Panc1 (cell line): ENCODE measurements at regions of chr4 and their contacts with region 1.

Region 1: DNA sequence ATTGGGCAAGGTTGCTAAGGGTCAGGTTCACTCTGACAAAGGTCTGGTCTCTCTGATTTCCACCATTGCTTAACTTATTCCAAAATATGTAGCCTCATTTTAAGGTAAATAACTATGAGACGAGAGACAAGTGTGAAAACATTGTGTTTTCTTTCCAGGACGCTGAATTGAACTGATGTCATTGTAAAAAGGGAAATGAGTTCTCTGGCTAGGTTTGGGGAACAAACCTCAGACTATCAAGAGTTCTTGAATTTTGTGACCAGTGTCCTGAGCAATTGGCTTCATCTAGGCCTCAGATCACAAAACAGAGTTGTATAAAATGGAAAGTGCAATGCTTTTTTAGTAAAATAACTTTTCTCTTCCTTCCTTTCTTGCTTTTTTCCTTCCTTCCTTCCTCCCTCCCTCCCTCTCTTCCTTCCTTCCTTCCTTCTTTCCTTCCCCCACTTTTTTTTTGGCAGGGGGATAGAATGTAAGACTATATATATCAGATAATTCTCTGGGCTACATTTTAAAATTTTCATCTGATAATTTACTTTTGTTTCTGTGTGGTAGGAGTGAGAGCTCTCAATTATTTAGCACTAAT is 30.8 kb upstream of the CXCL8 start:
- DNase-seq: no peak
- ATAC-seq: no peak
- H3K4me3 ChIP-seq: no peak overlapping the region
- H3K27ac ChIP-seq: peak overlapping the region; percentile 97
- H3K4me1 ChIP-seq: peaks cover 21% of the 10 kb centered on the region
- H3K27me3 ChIP-seq: no peaks in the 10 kb centered on the region
- CTCF ChIP-seq: no peak

Region 2: GRCh38 chr4:73452953-73453700 is 256.4 kb before region 1 on chr4:
- CTCF ChIA-PET with region 1: no interaction called
- POLR2A ChIA-PET with region 1: no interaction called
- in situ Hi-C with region 1: no loop called
- intact Hi-C with region 1: no loop called
- DNase-seq: no peak
- ATAC-seq: no peak
- H3K4me3 ChIP-seq: no peak overlapping the region
- H3K27ac ChIP-seq: no peak overlapping the region
- H3K4me1 ChIP-seq: no peaks in the 10 kb centered on the region
- H3K27me3 ChIP-seq: peaks cover 2% of the 10 kb centered on the region; the same call in 1 of the 2 replicates
- CTCF ChIP-seq: no peak

Region 3: GRCh38 chr4:73798842-73799241 is 89.3 kb after region 1 on chr4:
- CTCF ChIA-PET with region 1: no interaction called
- POLR2A ChIA-PET with region 1: no interaction called
- in situ Hi-C with region 1: no loop called
- intact Hi-C with region 1: no loop called
- DNase-seq: no peak
- ATAC-seq: no peak
- H3K4me3 ChIP-seq: no peak overlapping the region
- H3K27ac ChIP-seq: no peak overlapping the region
- H3K4me1 ChIP-seq: no peaks in the 10 kb centered on the region
- H3K27me3 ChIP-seq: no peaks in the 10 kb centered on the region
- CTCF ChIP-seq: no peak

Region 4: GRCh38 chr4:74098450-74098994 is 389.0 kb after region 1 on chr4:
- CTCF ChIA-PET with region 1: interaction called, 10 read pairs
- POLR2A ChIA-PET with region 1: no interaction called
- in situ Hi-C with region 1: no loop called
- intact Hi-C with region 1: no loop called
- DNase-seq: no peak
- ATAC-seq: peak; percentile 50
- H3K4me3 ChIP-seq: peak overlapping the region; percentile 52 to 54
- H3K27ac ChIP-seq: no peak overlapping the region
- H3K4me1 ChIP-seq: no peaks in the 10 kb centered on the region
- H3K27me3 ChIP-seq: no peaks in the 10 kb centered on the region
- CTCF ChIP-seq: no peak